Sigmoid colon (tissue), 7 donors: ENCODE measurements at regions of chr16 and their contacts with region 1.

Region 1: DNA sequence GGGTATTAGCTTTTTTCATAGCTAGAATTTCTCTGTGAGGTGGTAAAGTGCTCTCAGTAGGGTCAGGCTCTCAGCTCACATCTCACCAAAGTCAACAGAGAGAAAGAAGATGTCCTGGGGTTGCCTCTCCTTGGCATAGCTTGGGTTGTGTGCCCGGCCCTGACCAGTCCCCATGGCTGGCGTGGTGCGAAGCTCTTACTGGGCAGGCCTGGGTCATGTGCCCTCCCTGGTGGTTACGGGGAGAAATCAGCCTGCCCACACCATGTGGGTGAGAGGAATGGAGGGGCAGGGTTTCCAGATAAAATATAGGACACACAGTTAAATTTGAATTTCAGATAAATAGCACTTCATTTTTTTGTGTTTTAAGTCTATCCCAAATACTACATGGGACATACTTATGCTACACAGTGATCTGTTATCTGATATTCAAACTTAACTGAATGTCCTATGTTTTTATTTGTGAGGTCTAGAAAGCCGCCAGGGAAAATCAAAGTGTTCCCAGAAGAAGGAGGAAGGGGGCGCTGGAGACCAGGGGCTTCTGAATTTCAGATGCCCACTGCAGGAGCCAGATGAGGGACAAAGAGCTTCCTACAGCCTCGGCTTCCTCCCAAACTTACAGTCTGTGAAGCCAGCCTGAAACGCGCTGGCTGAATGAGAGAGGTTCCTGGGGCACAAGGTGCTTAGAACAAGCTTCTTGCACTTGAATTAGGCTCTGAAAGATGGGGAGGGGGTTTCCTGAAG is 45.4 kb downstream of the NKD1 start:
- DNase-seq: no peak
- H3K4me3 ChIP-seq: no peak overlapping the region
- H3K27ac ChIP-seq: peak overlapping the region; percentile 76 to 86 (median 82)
- H3K4me1 ChIP-seq: peaks cover 0 to 54% (median 46%) of the 10 kb centered on the region in 4 donors
- H3K27me3 ChIP-seq: no peaks in the 10 kb centered on the region
- CTCF ChIP-seq: peak in 1 of 4 experiments; percentile 21
- EP300 ChIP-seq: no peak
- POLR2A ChIP-seq: no peak

Region 2: GRCh38 chr16:50627419-50627818 is 33.8 kb after region 1 on chr16:
- intact Hi-C with region 1: loop called (anchors 5 kb)
- DNase-seq: peak; percentile 91
- H3K4me3 ChIP-seq: no peak overlapping the region
- H3K27ac ChIP-seq: peak overlapping the region; percentile 46 to 64 (median 60)
- H3K4me1 ChIP-seq: peaks cover 0 to 32% (median 26%) of the 10 kb centered on the region in 4 donors
- H3K27me3 ChIP-seq: no peaks in the 10 kb centered on the region
- CTCF ChIP-seq: peak; percentile 54 to 81 (median 66)
- EP300 ChIP-seq: no peak
- POLR2A ChIP-seq: no peak

Region 3: DNA sequence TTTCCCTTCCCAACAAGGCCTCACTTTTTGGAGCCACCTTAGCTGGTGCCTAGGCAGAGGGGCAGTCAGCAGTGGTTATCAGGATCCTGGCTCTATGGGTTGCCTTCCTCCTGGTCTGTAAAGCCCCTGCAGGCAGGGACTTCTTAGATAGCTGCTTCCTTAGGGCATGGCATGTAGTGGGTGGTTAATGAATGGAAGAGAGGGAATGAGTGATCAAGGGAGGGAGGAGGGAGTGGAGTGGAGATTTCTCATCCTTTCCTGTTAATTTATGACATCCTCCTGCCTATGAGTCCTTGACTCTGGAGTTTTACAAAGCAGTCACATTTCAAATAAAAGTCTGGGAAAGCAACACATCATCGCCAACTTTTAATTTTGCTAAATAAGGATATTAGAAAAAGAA is 46.8 kb after region 1 on chr16:
- intact Hi-C with region 1: no loop called
- DNase-seq: no peak
- H3K4me3 ChIP-seq: no peak overlapping the region
- H3K27ac ChIP-seq: no peak overlapping the region
- H3K4me1 ChIP-seq: peaks cover 0 to 18% (median 6%) of the 10 kb centered on the region in 4 donors
- H3K27me3 ChIP-seq: no peaks in the 10 kb centered on the region
- CTCF ChIP-seq: no peak
- EP300 ChIP-seq: no peak
- POLR2A ChIP-seq: no peak